ENCODE measurements at regions of chr3 and their contacts with region 1.

Region 1: DNA sequence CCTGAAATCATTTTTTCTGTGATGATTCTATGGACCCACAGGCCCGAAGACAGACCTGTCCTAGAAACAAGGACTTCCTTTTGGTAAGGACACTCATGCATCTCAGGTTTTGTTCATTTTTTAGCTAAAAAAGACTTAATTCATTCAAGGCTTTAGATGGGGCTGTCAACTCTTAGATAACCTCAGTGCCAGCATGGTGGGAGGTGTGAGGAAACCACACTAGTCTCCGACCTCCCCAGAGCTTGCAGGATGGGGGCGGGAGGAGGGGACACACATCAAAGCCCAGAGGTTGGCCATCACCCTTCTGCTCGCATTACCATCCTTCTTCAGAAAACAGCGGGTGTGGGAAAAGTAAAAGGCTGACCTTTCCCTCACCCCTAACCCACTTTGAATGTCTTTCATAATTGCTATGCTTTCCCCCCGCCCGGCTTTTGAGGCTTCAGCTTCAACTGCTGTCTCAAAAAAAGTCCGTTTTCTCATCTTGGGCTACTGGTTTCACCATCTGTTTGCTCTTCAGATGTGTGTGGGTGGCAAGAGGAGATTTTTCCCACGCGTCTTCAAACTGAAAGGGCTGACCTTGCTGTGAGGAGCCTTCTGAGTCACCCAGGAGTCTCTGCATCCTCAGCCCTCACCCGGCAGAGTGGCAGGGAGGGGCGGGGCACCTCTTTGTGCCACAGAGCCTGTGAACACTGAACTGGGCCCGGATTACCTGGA is 27.6 kb upstream of the CXCR6 start:
- DNase-seq: peak; percentile 98
- ATAC-seq: peak; percentile 92
- H3K4me3 ChIP-seq: peak overlapping the region; percentile 40; the same call in 1 of the 2 replicates
- H3K27ac ChIP-seq: peak overlapping the region; percentile 74
- H3K4me1 ChIP-seq: peaks cover 29% of the 10 kb centered on the region
- H3K27me3 ChIP-seq: no peaks in the 10 kb centered on the region; a peak in 1 of 4 replicates
- CTCF ChIP-seq: no peak
- EP300 ChIP-seq: peak; percentile 83 to 87
- POLR2A ChIP-seq: peak; percentile 54; the same call in 1 of the 2 replicates
- RAD21 ChIP-seq: peak; percentile 38

Region 2: GRCh38 chr3:45841757-45842491 is 73.8 kb before region 1 on chr3 and contains the start of gene LZTFL1:
- CTCF ChIA-PET with region 1: interaction called, 4 read pairs
- POLR2A ChIA-PET with region 1: no interaction called
- RAD21 ChIA-PET with region 1: interaction called, 20 read pairs
- SMC1A ChIA-PET with region 1: interaction called, 68 read pairs
- in situ Hi-C with region 1: no loop called
- intact Hi-C with region 1: no loop called
- DNase-seq: peak; percentile 88
- ATAC-seq: peak; percentile 99
- H3K4me3 ChIP-seq: peak within 1 kb of the TSS; percentile 92
- H3K27ac ChIP-seq: no peak within 1 kb of the TSS; the same call in 1 of the 2 replicates
- H3K4me1 ChIP-seq: no peaks in the 10 kb centered on the region; the same call in 1 of the 2 replicates
- H3K27me3 ChIP-seq: no peaks in the 10 kb centered on the region; a peak in 1 of 4 replicates
- CTCF ChIP-seq: no peak
- EP300 ChIP-seq: no peak
- POLR2A ChIP-seq: peak; percentile 79
- RAD21 ChIP-seq: no peak
- polyA plus RNA-seq, gene LZTFL1: 10.0 to 10.8 TPM

Region 3: DNA sequence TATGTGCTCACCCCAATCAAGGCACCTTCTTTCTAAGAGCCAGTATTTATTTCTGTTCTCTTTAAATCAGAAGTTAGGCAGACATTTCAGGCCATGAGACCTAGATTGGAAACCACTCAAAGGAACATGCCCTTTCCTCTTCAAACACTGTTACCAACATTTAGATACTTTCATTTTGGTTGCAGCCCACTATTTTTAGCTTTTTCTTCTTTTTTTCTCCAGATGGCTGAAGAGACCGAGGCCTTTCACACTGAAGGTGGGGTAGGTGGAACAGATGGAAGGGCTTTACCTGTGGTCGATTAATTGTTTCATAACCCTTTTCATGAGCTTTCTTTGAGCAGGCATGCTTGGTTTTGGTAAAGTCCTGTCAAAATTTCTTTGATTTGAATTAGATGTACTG is 62.8 kb before region 1 on chr3:
- CTCF ChIA-PET with region 1: interaction called, 4 read pairs
- POLR2A ChIA-PET with region 1: interaction called, 9 read pairs
- RAD21 ChIA-PET with region 1: interaction called, 5 read pairs
- SMC1A ChIA-PET with region 1: interaction called, 13 read pairs
- in situ Hi-C with region 1: no loop called
- intact Hi-C with region 1: no loop called
- DNase-seq: peak; percentile 9
- ATAC-seq: peak; percentile 78
- H3K4me3 ChIP-seq: no peak overlapping the region
- H3K27ac ChIP-seq: no peak overlapping the region
- H3K4me1 ChIP-seq: peaks cover 27% of the 10 kb centered on the region
- H3K27me3 ChIP-seq: no peaks in the 10 kb centered on the region
- CTCF ChIP-seq: no peak
- EP300 ChIP-seq: peak in 1 of 2 experiments; percentile 44; a peak in 1 of 4 replicates
- POLR2A ChIP-seq: no peak
- RAD21 ChIP-seq: peak; percentile 25; the same call in 1 of the 2 replicates

Region 4: GRCh38 chr3:45864760-45865519 is 50.7 kb before region 1 on chr3:
- CTCF ChIA-PET with region 1: interaction called, 67 read pairs
- POLR2A ChIA-PET with region 1: interaction called, 41 read pairs
- RAD21 ChIA-PET with region 1: interaction called, 169 read pairs
- SMC1A ChIA-PET with region 1: interaction called, 166 read pairs
- in situ Hi-C with region 1: loop called (anchors 5 kb)
- intact Hi-C with region 1: loop called (anchors 1 kb)
- DNase-seq: peak; percentile 71
- ATAC-seq: peak; percentile 84
- H3K4me3 ChIP-seq: no peak overlapping the region
- H3K27ac ChIP-seq: peak overlapping the region; percentile 90
- H3K4me1 ChIP-seq: peaks cover 71% of the 10 kb centered on the region
- H3K27me3 ChIP-seq: no peaks in the 10 kb centered on the region; a peak in 2 of 4 replicates
- CTCF ChIP-seq: no peak
- EP300 ChIP-seq: peak; percentile 99
- POLR2A ChIP-seq: no peak; the same call in 1 of the 2 replicates
- RAD21 ChIP-seq: peak; percentile 35

Region 5: GRCh38 chr3:45870099-45870498 is 45.6 kb before region 1 on chr3:
- CTCF ChIA-PET with region 1: interaction called, 67 read pairs
- POLR2A ChIA-PET with region 1: interaction called, 24 read pairs
- RAD21 ChIA-PET with region 1: interaction called, 229 read pairs
- SMC1A ChIA-PET with region 1: interaction called, 199 read pairs
- in situ Hi-C with region 1: no loop called
- intact Hi-C with region 1: loop called (anchors 1 kb)
- DNase-seq: no peak
- ATAC-seq: peak; percentile 64
- H3K4me3 ChIP-seq: no peak overlapping the region
- H3K27ac ChIP-seq: no peak overlapping the region
- H3K4me1 ChIP-seq: peaks cover 43% of the 10 kb centered on the region
- H3K27me3 ChIP-seq: no peaks in the 10 kb centered on the region; a peak in 1 of 4 replicates
- CTCF ChIP-seq: no peak
- EP300 ChIP-seq: peak in 1 of 2 experiments; percentile 62; a peak in 2 of 4 replicates
- POLR2A ChIP-seq: no peak
- RAD21 ChIP-seq: no peak

Region 6: DNA sequence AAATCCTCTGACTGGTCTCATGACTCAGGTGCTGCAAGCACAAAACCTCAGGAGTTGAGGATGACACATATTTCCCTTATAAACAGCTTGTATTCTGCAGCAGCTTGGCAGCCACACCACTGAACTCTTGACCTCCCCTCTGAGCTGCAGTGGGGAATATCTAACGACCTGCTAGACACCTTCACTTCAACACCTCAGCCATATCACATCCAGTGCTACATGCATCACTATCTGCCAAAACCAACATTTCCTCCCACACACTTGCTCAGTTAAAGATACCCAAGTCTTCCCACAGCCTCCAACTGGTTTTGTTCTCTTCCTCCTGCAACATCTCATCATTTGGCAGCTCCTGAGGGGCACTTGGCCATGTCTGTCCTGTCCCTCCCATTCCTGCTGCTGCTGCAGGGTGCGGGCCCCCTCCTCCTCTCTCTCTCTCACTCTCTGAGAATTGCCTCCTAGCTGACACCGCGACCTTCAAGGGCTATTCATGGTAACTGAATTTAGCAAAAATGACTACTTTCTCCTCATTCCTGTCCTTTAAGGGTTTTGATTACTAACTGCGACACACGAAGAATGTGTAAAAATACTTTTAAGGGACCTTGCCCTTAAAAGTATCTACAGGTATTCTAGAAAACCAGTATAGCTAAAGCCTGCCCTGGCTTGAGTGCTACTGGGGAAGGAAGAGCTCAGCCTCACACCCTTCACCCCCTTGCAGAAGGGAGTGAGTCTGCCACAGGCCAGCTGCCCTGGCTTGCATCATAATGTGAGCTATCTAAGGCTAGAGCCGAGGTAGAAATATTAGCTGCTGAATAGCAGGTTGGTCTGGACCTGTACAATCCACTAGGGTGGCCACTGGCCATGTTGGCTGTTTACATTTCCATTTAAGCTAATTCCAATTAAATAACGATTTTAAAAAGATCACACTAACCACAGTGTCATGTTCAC is 34.3 kb before region 1 on chr3:
- CTCF ChIA-PET with region 1: interaction called, 9 read pairs
- POLR2A ChIA-PET with region 1: interaction called, 14 read pairs
- RAD21 ChIA-PET with region 1: interaction called, 229 read pairs
- SMC1A ChIA-PET with region 1: interaction called, 199 read pairs
- in situ Hi-C with region 1: no loop called
- intact Hi-C with region 1: loop called (anchors 1 kb)
- DNase-seq: no peak
- ATAC-seq: peak; percentile 70
- H3K4me3 ChIP-seq: no peak overlapping the region
- H3K27ac ChIP-seq: 0 out of 2 replicates have a peak overlapping the region, but pooled peaks have one; percentile 28
- H3K4me1 ChIP-seq: peaks cover 42% of the 10 kb centered on the region
- H3K27me3 ChIP-seq: peaks cover 0 to 3% of the 10 kb centered on the region in 2 experiments; a peak in 1 of 4 replicates
- CTCF ChIP-seq: no peak
- EP300 ChIP-seq: peak; percentile 78 to 82; a peak in 3 of 4 replicates
- POLR2A ChIP-seq: peak; percentile 56; the same call in 1 of the 2 replicates
- RAD21 ChIP-seq: 0 out of 2 replicates have a peak, but pooled peaks have one; percentile 4

Region 7: GRCh38 chr3:45929042-45929679 is 13.5 kb after region 1 on chr3:
- CTCF ChIA-PET with region 1: interaction called, 50 read pairs
- POLR2A ChIA-PET with region 1: interaction called, 4 read pairs
- RAD21 ChIA-PET with region 1: interaction called, 36 read pairs
- SMC1A ChIA-PET with region 1: interaction called, 42 read pairs
- in situ Hi-C with region 1: no loop called
- intact Hi-C with region 1: loop called (anchors 1 kb)
- DNase-seq: no peak
- ATAC-seq: peak; percentile 100
- H3K4me3 ChIP-seq: no peak overlapping the region
- H3K27ac ChIP-seq: no peak overlapping the region
- H3K4me1 ChIP-seq: no peaks in the 10 kb centered on the region; the same call in 1 of the 2 replicates
- H3K27me3 ChIP-seq: no peaks in the 10 kb centered on the region
- CTCF ChIP-seq: peak; percentile 94 to 98 (median 97); a peak in 5 of 6 replicates
- EP300 ChIP-seq: no peak
- POLR2A ChIP-seq: no peak
- RAD21 ChIP-seq: peak; percentile 99

Measured in GM12878 (cell line).